ENCODE measurements at regions of chr1 and their contacts with region 1.

Region 1: DNA sequence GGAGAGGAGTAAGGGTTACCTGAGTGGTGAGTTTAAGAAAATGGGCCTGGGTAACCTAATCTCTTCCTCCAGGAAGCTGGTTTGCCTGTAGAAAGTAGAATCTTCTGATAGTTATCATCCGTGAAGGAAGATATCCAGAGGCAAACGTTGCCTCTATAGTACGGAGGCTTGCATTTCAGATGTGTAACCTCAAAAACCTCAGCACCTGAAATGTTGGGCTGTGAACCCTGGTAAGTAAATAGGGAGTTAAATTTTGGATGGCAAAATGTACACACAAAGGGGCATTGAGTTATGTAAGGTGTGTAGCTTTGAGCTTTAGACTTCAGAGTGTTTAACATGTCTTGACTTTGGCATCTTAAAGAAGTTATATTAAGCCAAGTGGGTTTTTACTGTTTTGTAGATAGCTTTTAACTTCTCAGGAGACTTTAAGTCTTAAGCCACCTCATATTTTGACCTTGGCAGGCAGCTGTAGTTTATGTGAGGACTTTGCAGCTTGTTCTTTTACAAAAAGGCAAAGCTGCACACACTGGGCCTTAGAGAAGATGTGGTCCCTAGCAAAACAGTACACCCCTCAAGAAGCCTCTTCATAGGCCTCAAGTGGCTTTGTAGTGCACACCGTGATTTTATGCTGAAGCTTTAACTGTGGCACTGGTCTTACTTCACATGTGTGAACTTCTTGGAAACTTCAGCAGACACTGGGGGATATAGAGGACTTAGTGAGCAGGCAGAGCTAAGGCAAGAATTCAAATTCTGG is 83.4 kb downstream of the SNRPE start:
- H3K4me3 ChIP-seq: no peak overlapping the region
- H3K27ac ChIP-seq: no peak overlapping the region
- H3K4me1 ChIP-seq: no peaks in the 10 kb centered on the region
- CTCF ChIP-seq: no peak

Region 2: GRCh38 chr1:203813581-203814341 is 131.1 kb before region 1 on chr1:
- CTCF ChIA-PET with region 1: no interaction called
- POLR2A ChIA-PET with region 1: no interaction called
- H3K4me3 ChIP-seq: no peak overlapping the region
- H3K27ac ChIP-seq: no peak overlapping the region
- H3K4me1 ChIP-seq: no peaks in the 10 kb centered on the region
- CTCF ChIP-seq: no peak

Region 3: GRCh38 chr1:203926025-203926540 is 18.7 kb before region 1 on chr1:
- CTCF ChIA-PET with region 1: interaction called, 3 read pairs
- POLR2A ChIA-PET with region 1: interaction called, 10 read pairs
- H3K4me3 ChIP-seq: no peak overlapping the region
- H3K27ac ChIP-seq: no peak overlapping the region
- H3K4me1 ChIP-seq: no peaks in the 10 kb centered on the region
- CTCF ChIP-seq: no peak